Activated CD8-positive, alpha-beta T cell treated with anti-CD3 and anti-CD28 coated beads, Interleukin-2, amount 10 ng/mL, durations not matched to agents 7 days and 5 days (primary cell): ENCODE measurements at regions of chr6 and their contacts with region 1.

Region 1: DNA sequence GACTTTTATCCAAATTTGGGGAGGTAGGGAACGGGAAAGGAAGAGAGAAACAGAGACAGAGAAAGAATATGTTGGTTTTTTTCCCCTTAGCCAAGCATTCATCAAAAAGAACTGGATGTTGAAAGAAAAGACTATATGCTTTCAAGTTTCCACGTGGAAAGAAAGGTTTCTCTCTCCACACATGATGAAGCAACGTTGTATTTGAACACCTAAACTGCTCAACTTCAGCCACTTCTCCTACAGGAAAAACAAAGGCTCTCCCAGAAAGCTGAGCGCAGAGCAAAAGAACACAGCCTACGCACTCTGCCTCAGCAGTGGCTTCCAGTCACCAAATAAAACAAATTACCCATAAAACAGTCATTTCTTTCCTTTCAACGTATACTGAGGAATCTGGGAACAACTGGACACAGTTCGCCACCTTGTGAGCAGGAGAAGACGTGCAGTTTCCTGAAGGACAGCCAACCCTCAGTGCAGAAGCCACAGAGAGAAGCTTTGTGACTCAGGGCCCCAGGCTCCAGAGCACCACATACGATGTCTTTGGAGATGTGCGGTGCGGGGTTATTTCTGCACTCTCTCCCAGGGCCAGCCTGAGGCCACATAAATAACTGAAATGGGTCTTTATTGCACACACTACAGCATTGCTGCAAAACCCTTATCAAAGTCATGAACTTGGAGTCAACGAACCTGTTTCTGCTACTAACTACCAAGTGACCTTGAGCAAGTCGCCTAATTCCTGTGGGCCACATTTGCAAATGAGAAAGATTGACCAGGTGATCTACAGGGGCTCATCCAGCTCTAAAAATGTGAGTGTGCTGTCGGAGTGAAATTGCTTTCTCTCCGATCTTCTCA is 10.1 kb downstream of the IL17F start:
- DNase-seq: peak; percentile 27
- ATAC-seq: no peak
- H3K4me3 Mint-ChIP-seq: no peak overlapping the region
- H3K27ac Mint-ChIP-seq: no peak overlapping the region
- H3K4me1 Mint-ChIP-seq: peaks cover 12% of the 10 kb centered on the region
- H3K27me3 Mint-ChIP-seq: peaks cover 68% of the 10 kb centered on the region

Region 2: DNA sequence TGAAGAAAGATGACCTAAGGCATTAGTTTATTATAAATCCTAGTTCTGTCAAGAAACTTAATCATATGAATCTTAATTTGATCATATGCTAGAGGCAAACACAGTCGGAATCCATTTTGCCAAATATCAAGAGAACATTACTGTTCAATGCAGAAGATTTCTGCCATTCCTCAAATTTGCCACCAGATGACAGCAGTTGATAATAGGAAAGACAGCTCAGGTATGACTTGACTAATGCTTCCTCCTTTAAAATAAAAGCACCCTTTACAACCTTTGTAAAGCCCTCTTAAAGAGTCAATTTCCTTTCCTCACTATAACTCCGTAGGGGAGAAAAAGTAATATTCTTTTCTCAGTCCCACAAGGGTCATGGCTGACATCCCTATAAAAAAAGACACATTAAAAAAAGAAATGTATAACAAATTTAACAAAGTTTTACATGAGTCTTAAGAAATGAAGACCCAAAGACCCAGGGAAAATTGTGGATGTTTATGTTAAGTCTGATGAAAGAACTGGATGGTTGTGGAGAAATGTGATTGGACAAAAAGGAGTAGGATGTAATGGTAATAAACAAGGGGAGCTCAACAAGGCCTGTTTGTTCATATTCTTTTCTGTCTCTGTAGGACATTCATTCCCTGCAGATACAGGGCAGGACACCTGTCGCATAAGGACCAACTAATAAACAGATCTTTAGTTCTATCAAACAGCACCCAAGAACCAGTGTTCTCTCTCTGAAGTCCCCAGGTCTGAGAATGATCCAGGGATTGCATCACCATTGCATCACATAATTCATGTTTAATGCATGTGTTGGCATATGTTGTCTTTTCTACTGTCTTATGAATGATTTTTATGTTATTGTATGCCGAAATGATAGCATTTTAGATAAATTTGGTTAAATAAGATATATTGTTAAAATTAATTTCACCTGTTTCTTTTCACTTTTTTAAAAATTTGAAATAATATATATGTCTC is 71.0 kb before region 1 on chr6:
- CTCF ChIA-PET with region 1: interaction called, 12 read pairs
- POLR2A ChIA-PET with region 1: no interaction called
- DNase-seq: no peak
- ATAC-seq: peak; percentile 49
- H3K4me3 Mint-ChIP-seq: no peak overlapping the region
- H3K27ac Mint-ChIP-seq: no peak overlapping the region
- H3K4me1 Mint-ChIP-seq: no peaks in the 10 kb centered on the region
- H3K27me3 Mint-ChIP-seq: peaks cover 32% of the 10 kb centered on the region

Region 3: DNA sequence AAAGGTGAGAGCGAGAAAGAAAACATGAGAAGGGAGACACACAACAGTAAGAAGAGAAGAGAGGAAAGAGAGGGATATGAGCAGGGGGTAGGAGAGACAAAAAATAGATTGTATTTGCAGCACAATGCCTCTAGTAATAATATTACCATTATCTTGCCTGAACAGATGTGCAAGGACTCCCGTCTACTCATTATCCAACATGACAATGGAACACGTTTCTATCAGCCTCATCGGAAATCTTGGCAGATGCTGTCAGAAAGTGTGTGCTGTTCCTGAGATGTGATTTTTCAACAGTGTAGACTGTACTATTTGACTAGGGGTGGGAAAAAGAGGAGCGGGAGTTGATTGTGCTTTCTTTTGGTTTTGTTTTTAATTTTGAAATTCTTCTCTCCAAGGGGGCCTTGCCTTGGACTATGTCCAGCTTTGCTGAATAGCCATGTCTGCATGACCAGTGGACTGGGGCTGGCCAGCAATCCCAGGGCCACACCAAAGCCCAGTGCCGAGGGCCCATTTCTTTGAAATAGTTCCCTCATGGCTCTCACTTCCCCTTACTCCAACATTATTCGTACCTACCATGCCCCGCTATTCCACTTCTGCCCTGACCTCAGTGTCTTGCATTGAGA is 354.0 kb after region 1 on chr6:
- CTCF ChIA-PET with region 1: no interaction called
- POLR2A ChIA-PET with region 1: no interaction called
- DNase-seq: no peak
- ATAC-seq: no peak
- H3K4me3 Mint-ChIP-seq: no peak overlapping the region
- H3K27ac Mint-ChIP-seq: no peak overlapping the region
- H3K4me1 Mint-ChIP-seq: no peaks in the 10 kb centered on the region
- H3K27me3 Mint-ChIP-seq: peaks cover 10% of the 10 kb centered on the region